HEK293 (cell line): ENCODE measurements at regions of chr12 and their contacts with region 1.

Region 1: GRCh38 chr12:12081836-12082497 is 11.2 kb downstream of the BCL2L14 start:
- H3K4me3 ChIP-seq: no peak overlapping the region
- H3K27ac ChIP-seq: no peak overlapping the region
- H3K4me1 ChIP-seq: no peaks in the 10 kb centered on the region
- CTCF ChIP-seq: peak; percentile 7; the same call in 1 of the 2 replicates

Region 2: DNA sequence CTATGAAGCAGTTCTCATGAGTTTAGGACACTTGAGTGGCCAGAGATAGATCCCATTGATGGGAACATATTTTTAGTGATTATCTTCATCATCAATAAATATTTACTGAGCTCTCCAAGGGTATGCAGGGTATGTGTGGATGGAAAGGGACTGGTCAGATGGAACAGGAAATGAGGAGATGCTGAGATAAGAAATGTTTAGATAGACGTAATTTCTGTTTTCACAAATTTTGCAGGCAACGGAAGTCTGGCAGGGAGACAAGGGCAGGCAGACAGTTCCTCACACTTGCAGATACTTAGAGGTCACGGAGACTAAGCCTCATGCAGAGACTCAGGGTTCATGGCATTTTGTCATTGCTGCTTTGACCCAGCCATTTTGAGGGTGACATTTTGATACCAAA is 13.1 kb after region 1 on chr12:
- CTCF ChIA-PET with region 1: interaction called, 14 read pairs
- POLR2A ChIA-PET with region 1: no interaction called
- H3K4me3 ChIP-seq: no peak overlapping the region
- H3K27ac ChIP-seq: no peak overlapping the region
- H3K4me1 ChIP-seq: peaks cover 3% of the 10 kb centered on the region; the same call in 1 of the 2 replicates
- CTCF ChIP-seq: no peak

Region 3: DNA sequence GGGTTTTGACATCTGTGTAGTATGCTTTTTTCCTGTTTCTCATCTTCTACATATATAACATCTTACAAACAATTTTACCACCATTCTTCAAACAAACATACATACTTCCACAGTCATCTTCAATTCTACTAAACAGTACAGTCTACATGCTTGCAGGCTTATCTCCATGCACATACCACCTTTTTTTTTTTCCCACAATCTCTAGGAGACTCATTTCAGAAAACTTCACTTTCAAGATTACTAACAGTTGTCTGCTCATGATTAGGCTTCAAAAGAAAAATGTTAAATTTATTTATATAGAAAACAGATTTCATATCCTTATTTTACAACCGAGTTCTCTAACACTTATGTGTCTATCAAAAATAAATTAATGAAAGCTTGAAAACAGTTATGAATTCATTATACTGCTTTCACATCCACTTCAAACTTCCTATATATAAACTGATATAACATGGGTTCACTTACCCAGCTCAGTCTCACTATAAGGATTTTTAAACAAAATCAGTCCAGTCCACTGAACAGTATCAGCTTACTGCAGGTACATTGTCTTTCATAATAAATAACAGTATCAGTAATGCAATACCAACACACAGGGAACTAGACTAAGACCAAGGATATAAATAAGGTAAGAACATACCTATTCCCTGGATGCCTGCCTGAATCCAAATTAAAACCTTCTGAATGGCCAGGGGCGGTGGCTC is 142.4 kb after region 1 on chr12:
- CTCF ChIA-PET with region 1: no interaction called
- POLR2A ChIA-PET with region 1: no interaction called
- H3K4me3 ChIP-seq: no peak overlapping the region
- H3K27ac ChIP-seq: no peak overlapping the region
- H3K4me1 ChIP-seq: peaks cover 4% of the 10 kb centered on the region
- CTCF ChIP-seq: no peak

Region 4: GRCh38 chr12:12334367-12335040 is 252.5 kb after region 1 on chr12:
- CTCF ChIA-PET with region 1: interaction called, 40 read pairs
- POLR2A ChIA-PET with region 1: no interaction called
- H3K4me3 ChIP-seq: no peak overlapping the region
- H3K27ac ChIP-seq: no peak overlapping the region; the same call in 1 of the 2 replicates
- H3K4me1 ChIP-seq: peaks cover 10% of the 10 kb centered on the region
- CTCF ChIP-seq: peak; percentile 78